ENCODE measurements at regions of chr6 and their contacts with region 1.

Region 1: GRCh38 chr6:85323435-85324040 is 126.3 kb upstream of the NT5E start:
- DNase-seq: peak; percentile 46
- H3K4me3 ChIP-seq: no peak overlapping the region
- H3K27ac ChIP-seq: no peak overlapping the region
- H3K27me3 ChIP-seq: peaks cover 11% of the 10 kb centered on the region
- CTCF ChIP-seq: peak; percentile 92

Region 2: GRCh38 chr6:83615025-83615999 is 1708.2 kb before region 1 on chr6:
- CTCF ChIA-PET with region 1: interaction called, 23 read pairs
- POLR2A ChIA-PET with region 1: no interaction called
- DNase-seq: peak; percentile 1
- H3K4me3 ChIP-seq: no peak overlapping the region
- H3K27ac ChIP-seq: no peak overlapping the region
- H3K27me3 ChIP-seq: no peaks in the 10 kb centered on the region
- CTCF ChIP-seq: peak; percentile 68

Region 3: DNA sequence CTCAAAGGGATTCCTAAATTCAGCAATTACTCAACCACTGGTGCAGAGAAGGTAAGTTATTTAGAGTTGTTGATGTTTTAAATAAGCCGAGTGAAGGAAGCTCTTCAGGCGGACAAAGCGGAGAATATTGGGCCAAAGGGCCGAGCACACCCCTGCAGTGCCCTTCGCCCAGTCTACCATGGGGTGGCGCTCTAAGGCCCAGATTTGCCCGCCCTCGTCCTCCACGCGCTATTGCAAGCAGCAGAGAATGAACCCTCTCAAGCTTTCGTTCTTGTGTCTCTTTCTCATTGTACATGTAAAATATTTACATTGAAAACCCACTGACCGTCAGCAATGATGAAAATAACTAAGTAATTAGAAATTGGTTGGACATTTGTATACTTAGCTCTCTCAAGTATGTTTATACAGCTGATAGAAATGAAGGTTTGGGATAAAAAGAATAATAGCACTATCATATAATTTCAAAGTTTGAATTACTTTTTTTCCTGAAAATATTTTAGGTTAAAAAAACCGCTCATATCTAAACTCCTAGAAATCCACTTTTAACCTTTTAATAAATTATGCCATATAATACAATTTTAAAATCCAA is 901.1 kb before region 1 on chr6:
- CTCF ChIA-PET with region 1: interaction called, 50 read pairs
- POLR2A ChIA-PET with region 1: no interaction called
- DNase-seq: peak; percentile 15
- H3K4me3 ChIP-seq: no peak overlapping the region
- H3K27ac ChIP-seq: no peak overlapping the region
- H3K27me3 ChIP-seq: peaks cover 6% of the 10 kb centered on the region
- CTCF ChIP-seq: peak; percentile 81

Region 4: GRCh38 chr6:85015396-85015990 is 308.0 kb before region 1 on chr6:
- CTCF ChIA-PET with region 1: interaction called, 15 read pairs
- POLR2A ChIA-PET with region 1: no interaction called
- DNase-seq: peak; percentile 4
- H3K4me3 ChIP-seq: no peak overlapping the region
- H3K27ac ChIP-seq: no peak overlapping the region
- H3K27me3 ChIP-seq: no peaks in the 10 kb centered on the region
- CTCF ChIP-seq: peak; percentile 81

Region 5: DNA sequence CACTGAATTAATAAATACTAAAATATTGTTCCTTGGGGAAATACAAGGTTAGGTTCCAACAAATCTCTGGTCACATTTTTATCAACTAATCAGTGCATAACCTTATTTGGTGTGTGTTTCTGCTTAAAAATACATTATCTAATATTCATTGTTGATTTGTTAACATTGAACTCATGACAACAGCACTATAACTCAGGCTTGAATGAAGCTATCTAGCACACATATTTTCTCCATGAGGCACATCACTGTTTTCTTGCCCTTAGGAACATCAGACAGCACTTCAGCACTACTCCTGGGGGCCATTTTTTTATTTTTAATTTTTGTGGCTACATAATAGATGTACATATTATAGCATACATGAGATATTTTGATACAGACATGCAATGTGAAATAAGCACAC is 150.8 kb before region 1 on chr6:
- CTCF ChIA-PET with region 1: no interaction called
- POLR2A ChIA-PET with region 1: no interaction called
- DNase-seq: no peak
- H3K4me3 ChIP-seq: no peak overlapping the region
- H3K27ac ChIP-seq: no peak overlapping the region
- H3K27me3 ChIP-seq: no peaks in the 10 kb centered on the region
- CTCF ChIP-seq: no peak

Region 6: DNA sequence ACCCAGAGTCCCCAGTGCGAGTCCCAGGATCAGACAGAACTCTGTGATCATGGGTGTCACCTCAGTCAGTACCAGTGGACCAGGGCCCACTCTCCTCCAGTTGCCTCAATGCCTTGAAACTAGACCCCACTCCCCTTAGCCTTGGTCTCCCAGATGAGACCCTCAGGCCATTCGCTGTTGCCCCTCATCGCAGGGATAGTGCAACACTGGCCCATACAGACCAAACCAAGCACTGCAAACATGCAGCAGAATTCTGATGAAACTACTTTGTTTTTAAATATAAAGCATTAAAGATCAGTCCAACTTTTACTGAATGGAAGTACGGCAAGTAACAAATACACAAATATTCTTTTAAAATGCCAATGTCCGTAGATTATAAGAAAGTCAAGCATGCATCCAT is 25.1 kb after region 1 on chr6:
- CTCF ChIA-PET with region 1: interaction called, 11 read pairs
- POLR2A ChIA-PET with region 1: no interaction called
- DNase-seq: no peak
- H3K4me3 ChIP-seq: no peak overlapping the region
- H3K27ac ChIP-seq: no peak overlapping the region
- H3K27me3 ChIP-seq: no peaks in the 10 kb centered on the region
- CTCF ChIP-seq: peak; percentile 41; the same call in 1 of the 2 replicates